ENCODE measurements at regions of chr1 and their contacts with region 1.

Region 1: GRCh38 chr1:23979878-23980724 is at the start of gene SRSF10:
- DNase-seq: peak; percentile 98
- ATAC-seq: peak; percentile 86
- H3K4me3 Mint-ChIP-seq: peak within 1 kb of the TSS; percentile 98
- H3K27ac Mint-ChIP-seq: peak within 1 kb of the TSS; percentile 98
- H3K4me1 Mint-ChIP-seq: peaks cover 34% of the 10 kb centered on the region
- H3K27me3 Mint-ChIP-seq: no peaks in the 10 kb centered on the region
- CTCF ChIP-seq: no peak
- total RNA-seq, gene SRSF10: 203 to 206 TPM

Region 2: GRCh38 chr1:23959041-23959460 is 21.1 kb before region 1 on chr1:
- CTCF ChIA-PET with region 1: interaction called, 6 read pairs
- POLR2A ChIA-PET with region 1: interaction called, 128 read pairs
- intact Hi-C with region 1: no loop called
- DNase-seq: peak; percentile 99
- ATAC-seq: peak; percentile 85
- H3K4me3 Mint-ChIP-seq: peak overlapping the region; percentile 99
- H3K27ac Mint-ChIP-seq: peak overlapping the region; percentile 100
- H3K4me1 Mint-ChIP-seq: peaks cover 52% of the 10 kb centered on the region
- H3K27me3 Mint-ChIP-seq: no peaks in the 10 kb centered on the region
- CTCF ChIP-seq: peak; percentile 37

Region 3: DNA sequence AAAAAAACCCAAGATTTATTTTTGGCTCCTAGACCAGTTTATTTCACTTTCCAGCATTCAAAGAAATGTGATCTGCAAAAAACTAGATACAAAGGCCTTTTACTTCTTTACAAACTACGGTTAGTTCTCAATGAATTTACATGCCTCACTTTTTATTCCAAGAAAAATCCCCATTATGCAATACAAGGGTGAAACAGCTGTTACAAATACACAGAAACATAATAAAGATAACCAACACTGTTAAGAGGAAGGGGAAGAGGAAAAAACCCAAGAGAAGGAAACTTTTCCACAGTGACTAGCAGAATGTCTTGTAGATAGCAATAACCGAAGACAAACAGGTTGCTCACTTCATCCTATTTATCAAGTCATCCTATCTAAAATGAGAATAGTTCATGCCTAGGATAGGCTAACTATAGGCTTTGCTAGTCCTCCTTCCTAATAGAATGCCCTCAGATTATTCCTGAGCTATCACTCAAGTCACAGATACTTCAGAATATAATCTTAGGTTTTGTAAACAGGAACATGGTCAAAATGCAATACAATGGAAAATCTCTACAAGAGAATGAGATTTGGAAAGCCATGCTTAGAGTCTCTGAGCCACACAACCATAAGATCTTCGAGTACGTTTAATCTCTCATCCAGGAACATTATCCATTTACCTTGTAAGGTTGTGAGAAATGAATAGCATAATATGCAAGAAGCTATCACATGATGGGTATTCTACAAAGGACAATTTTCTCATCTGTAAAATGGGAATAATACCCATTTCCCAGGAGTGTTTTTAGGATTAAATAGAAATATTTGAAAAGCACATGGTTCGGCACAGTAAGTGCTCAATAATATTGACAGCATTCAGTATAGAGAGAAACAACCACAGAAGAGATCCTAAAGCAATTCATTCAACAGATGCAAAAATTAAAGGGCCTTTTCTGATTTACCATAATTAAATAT is 15.0 kb before region 1 on chr1:
- CTCF ChIA-PET with region 1: interaction called, 6 read pairs
- POLR2A ChIA-PET with region 1: interaction called, 128 read pairs
- intact Hi-C with region 1: no loop called
- DNase-seq: no peak
- ATAC-seq: no peak
- H3K4me3 Mint-ChIP-seq: no peak overlapping the region
- H3K27ac Mint-ChIP-seq: peak overlapping the region; percentile 83
- H3K4me1 Mint-ChIP-seq: peaks cover 71% of the 10 kb centered on the region
- H3K27me3 Mint-ChIP-seq: no peaks in the 10 kb centered on the region
- CTCF ChIP-seq: no peak